Heart left ventricle (tissue), 16 donors: ENCODE measurements at regions of chr19 and their contacts with region 1.

Region 1: GRCh38 chr19:7674010-7675005 is 2.6 kb upstream of the MCEMP1 start:
- DNase-seq: peak; percentile 55 to 81 (median 76)
- ATAC-seq: peak in 3 of 4 donors; percentile 87 to 89 (median 87)
- H3K4me3 ChIP-seq: no peak overlapping the region
- H3K27ac ChIP-seq: peak overlapping the region in 1 of 12 donors; percentile 70
- H3K4me1 ChIP-seq: peaks cover 0 to 19% (median 0%) of the 10 kb centered on the region in 12 donors
- H3K27me3 ChIP-seq: peaks cover 0 to 44% (median 14%) of the 10 kb centered on the region in 9 donors
- CTCF ChIP-seq: no peak
- POLR2A ChIP-seq: no peak

Region 2: GRCh38 chr19:7152568-7152967 is 521.7 kb before region 1 on chr19:
- intact Hi-C with region 1: no loop called
- DNase-seq: no peak
- ATAC-seq: peak in 1 of 4 donors; percentile 15
- H3K4me3 ChIP-seq: no peak overlapping the region
- H3K27ac ChIP-seq: no peak overlapping the region
- H3K4me1 ChIP-seq: peaks cover 0 to 8% (median 0%) of the 10 kb centered on the region in 12 donors
- H3K27me3 ChIP-seq: no peaks in the 10 kb centered on the region
- CTCF ChIP-seq: no peak
- POLR2A ChIP-seq: no peak

Region 3: DNA sequence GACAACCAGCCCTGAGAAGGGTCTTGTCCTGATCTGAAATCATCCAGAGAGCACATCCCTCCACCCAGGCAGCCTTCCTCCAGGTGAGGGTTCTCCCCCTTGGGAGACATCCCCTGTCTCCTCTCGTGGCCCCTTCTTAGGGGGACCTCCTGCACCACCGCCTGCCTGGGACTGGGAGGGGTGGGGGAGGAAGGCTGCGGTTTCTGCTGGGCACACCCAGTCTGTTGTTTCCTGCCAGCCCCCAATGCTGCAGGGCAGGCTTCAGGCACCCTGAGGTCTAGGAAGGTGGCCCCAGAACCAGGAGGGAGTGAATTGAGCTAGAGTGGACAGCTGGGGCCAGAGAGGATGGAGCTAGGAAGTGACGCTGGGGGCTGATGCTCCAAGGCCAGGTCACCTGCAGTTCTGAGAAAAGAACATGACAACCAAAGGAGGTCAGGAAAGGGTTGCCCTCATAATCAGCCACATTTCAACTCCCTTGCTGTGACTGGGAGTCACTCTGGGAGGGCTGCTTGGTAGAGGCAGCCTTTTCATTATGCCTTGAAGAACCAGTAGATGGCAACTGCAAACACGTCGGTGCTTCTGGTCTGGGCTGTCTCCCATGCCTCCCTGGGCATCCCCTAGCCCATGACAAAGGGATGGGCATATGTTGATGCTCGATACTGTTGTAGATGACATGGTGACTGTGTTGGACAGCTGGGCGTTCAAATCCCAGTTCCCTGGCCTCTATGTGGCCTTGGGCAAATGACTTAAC is 324.2 kb before region 1 on chr19:
- intact Hi-C with region 1: loop called in 5 of 10 experiments (anchors 5 to 10 kb)
- DNase-seq: no peak
- ATAC-seq: peak in 1 of 4 donors; percentile 14
- H3K4me3 ChIP-seq: peak overlapping the region in 2 of 12 donors; percentile 26 to 56
- H3K27ac ChIP-seq: peak overlapping the region in 1 of 12 donors; percentile 86
- H3K4me1 ChIP-seq: peaks cover 0 to 28% (median 0%) of the 10 kb centered on the region in 12 donors
- H3K27me3 ChIP-seq: no peaks in the 10 kb centered on the region
- CTCF ChIP-seq: no peak
- POLR2A ChIP-seq: no peak

Region 4: GRCh38 chr19:7355151-7355820 is 319.0 kb before region 1 on chr19:
- intact Hi-C with region 1: loop called in 5 of 10 experiments (anchors 5 to 10 kb)
- DNase-seq: no peak
- ATAC-seq: no peak
- H3K4me3 ChIP-seq: no peak overlapping the region
- H3K27ac ChIP-seq: peak overlapping the region in 1 of 12 donors; percentile 80
- H3K4me1 ChIP-seq: peaks cover 0 to 5% (median 0%) of the 10 kb centered on the region in 12 donors
- H3K27me3 ChIP-seq: peaks cover 0 to 6% (median 0%) of the 10 kb centered on the region in 9 donors
- CTCF ChIP-seq: no peak
- POLR2A ChIP-seq: no peak

Region 5: DNA sequence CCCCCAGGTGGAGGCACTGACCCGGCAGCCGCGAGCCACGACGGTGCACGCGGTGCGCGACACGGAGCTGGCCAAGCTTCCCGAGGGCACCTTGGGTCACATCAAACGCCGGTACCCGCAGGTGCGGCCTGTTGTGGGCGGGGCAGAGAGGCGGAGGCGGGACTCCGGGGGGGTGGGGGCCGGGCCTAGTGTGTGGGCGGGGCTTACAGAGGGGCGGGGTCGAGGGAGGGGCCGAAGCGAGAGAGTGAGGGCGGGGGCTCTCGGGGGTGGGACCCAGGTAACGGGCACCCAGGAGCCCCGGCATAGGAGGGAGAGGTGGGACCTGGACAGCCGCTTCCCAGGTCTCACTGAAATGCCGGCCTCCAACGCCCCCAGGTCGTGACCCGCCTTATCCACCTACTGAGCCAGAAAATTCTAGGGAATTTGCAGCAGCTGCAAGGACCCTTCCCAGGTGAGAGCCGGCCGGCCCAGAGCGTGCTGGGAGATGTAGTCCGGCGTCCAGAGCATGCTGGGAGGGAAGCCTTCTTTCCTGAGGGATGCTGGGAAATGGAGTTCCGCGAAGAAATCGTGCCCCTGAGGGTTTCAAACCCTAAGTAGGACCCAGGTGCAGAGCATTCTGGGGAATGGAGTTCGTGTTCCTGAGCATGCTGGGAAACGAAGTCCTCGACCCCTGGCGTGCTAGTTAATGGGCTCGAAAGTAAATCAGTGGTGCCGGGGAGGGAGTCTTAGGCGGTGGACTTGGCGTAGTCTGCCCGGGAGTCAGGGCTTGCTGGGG is 123.1 kb before region 1 on chr19:
- intact Hi-C with region 1: no loop called
- DNase-seq: peak in 4 of 5 donors; percentile 65 to 86 (median 76)
- ATAC-seq: peak; percentile 92 to 97 (median 95)
- H3K4me3 ChIP-seq: peak overlapping the region in 9 of 12 donors; percentile 28 to 56 (median 41)
- H3K27ac ChIP-seq: peak overlapping the region in 1 of 12 donors; percentile 63
- H3K4me1 ChIP-seq: peaks cover 0 to 5% (median 0%) of the 10 kb centered on the region in 12 donors
- H3K27me3 ChIP-seq: no peaks in the 10 kb centered on the region
- CTCF ChIP-seq: no peak
- POLR2A ChIP-seq: no peak

Region 6: DNA sequence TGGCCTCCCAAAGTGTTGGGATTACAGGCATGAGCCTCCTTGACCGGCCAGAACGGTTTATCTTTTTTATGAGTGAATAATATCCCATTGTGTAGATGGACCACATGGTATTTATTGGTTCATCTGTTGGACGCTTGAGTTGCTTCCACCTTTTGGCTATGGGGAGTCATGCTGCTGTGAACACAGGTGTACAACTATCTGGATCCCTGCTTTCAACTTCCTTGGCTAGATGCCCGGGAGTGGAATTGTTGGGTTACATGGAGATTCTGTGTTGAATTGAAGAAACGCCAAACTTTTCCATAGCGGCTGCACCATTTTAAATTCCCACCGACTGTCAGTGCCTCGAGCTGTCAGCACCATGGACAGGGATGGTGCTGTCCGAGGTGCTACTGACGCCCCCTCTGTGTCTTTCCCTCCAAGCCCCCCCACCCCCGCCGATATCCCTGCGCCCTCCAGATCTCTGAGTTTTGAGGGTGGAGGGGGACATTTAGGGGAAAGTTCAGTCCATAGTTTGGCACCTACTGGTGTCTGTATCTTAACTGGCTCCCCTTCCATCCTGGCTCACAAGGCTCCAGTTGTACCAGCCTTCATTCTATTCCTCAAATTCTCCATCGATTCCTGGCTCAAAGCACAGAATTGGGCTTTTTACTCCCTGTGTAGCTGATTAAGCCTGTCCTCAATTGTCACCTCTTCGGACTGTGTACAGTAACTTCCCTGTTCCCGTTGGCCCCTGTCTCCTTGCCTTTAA is 111.5 kb before region 1 on chr19:
- intact Hi-C with region 1: loop called in 3 of 10 experiments (anchors 5 to 10 kb)
- DNase-seq: no peak
- ATAC-seq: no peak
- H3K4me3 ChIP-seq: no peak overlapping the region
- H3K27ac ChIP-seq: no peak overlapping the region
- H3K4me1 ChIP-seq: no peaks in the 10 kb centered on the region
- H3K27me3 ChIP-seq: no peaks in the 10 kb centered on the region
- CTCF ChIP-seq: no peak
- POLR2A ChIP-seq: no peak

Region 7: GRCh38 chr19:7570761-7571160 is 103.5 kb before region 1 on chr19:
- intact Hi-C with region 1: loop called in 4 of 10 experiments (anchors 5 to 10 kb)
- DNase-seq: no peak
- ATAC-seq: no peak
- H3K4me3 ChIP-seq: no peak overlapping the region
- H3K27ac ChIP-seq: no peak overlapping the region
- H3K4me1 ChIP-seq: no peaks in the 10 kb centered on the region
- H3K27me3 ChIP-seq: no peaks in the 10 kb centered on the region
- CTCF ChIP-seq: no peak
- POLR2A ChIP-seq: no peak

Region 8: DNA sequence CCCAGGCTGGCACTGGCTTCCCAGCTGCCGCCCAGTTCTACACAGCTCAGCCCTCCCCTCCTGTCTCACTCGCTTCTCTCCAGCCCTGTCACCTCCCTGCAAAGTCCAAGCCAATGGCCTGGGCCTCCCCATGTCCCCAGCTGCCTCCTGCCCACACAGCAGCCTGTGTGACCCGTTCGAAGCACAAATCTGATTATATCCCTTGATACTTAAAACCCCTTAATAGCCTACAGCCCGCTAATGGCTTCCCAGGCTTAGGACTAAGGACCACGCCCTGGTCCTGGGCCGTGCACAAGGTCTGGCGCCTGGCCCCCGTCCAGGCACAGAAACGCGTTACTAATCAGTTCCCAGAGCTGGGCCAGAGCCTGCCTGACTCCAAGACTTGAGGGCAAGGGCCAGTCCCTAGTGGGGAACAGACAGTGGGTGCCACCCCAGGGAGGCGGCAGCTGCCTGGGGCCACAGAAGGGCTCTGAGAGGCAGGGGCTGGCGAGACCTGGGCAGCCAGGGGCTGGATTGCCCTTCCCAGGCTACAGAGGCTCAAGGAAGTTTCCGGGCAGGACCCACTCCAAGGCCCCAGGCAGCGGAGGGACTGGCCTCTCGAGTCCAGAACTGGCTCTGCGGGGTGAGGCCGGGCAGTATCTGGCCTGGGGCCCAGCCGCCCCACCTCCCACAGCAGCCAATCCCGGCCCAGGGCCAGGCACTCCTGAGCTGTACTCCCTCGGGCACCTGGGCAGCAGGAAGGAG is 55.4 kb before region 1 on chr19:
- intact Hi-C with region 1: no loop called
- DNase-seq: no peak
- ATAC-seq: peak in 3 of 4 donors; percentile 13 to 63 (median 50)
- H3K4me3 ChIP-seq: no peak overlapping the region
- H3K27ac ChIP-seq: peak overlapping the region in 4 of 12 donors; percentile 2 to 56 (median 34)
- H3K4me1 ChIP-seq: peaks cover 0 to 14% (median 0%) of the 10 kb centered on the region in 12 donors
- H3K27me3 ChIP-seq: no peaks in the 10 kb centered on the region
- CTCF ChIP-seq: no peak
- POLR2A ChIP-seq: no peak